ENCODE measurements at regions of chr2 and their contacts with region 1.

Region 1: GRCh38 chr2:60002158-60002867 is 551.1 kb downstream of the BCL11A start:
- DNase-seq: no peak
- ATAC-seq: no peak
- H3K4me3 Mint-ChIP-seq: no peak overlapping the region
- H3K27ac Mint-ChIP-seq: no peak overlapping the region
- H3K4me1 Mint-ChIP-seq: peaks cover 21% of the 10 kb centered on the region
- H3K27me3 Mint-ChIP-seq: no peaks in the 10 kb centered on the region
- CTCF ChIP-seq: no peak

Region 2: DNA sequence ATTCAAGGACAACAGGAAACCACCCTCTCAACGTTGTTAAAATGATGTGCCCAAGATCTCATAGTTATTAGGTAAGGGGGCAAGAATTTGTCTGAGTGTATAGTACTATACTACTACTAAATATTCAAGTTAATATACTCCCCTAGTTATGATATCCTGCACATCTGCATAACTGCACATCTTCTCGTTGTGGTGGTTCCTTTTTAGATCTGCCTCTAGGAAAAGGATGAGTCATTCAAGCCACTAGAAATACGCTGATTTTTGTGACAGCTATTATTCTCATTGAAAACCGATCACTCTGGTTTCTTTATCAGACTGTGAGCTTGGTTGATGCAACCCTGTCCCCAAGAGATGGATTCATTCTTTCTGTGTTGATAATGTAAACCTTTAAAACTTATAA is 694.2 kb before region 1 on chr2:
- CTCF ChIA-PET with region 1: no interaction called
- POLR2A ChIA-PET with region 1: no interaction called
- intact Hi-C with region 1: loop called (anchors 5 kb)
- DNase-seq: no peak
- ATAC-seq: no peak
- H3K4me3 Mint-ChIP-seq: no peak overlapping the region
- H3K27ac Mint-ChIP-seq: no peak overlapping the region
- H3K4me1 Mint-ChIP-seq: peaks cover 6% of the 10 kb centered on the region
- H3K27me3 Mint-ChIP-seq: peaks cover 2% of the 10 kb centered on the region
- CTCF ChIP-seq: no peak

Region 3: GRCh38 chr2:59630789-59631188 is 371.5 kb before region 1 on chr2:
- CTCF ChIA-PET with region 1: no interaction called
- POLR2A ChIA-PET with region 1: no interaction called
- intact Hi-C with region 1: no loop called
- DNase-seq: no peak
- ATAC-seq: no peak
- H3K4me3 Mint-ChIP-seq: no peak overlapping the region
- H3K27ac Mint-ChIP-seq: no peak overlapping the region
- H3K4me1 Mint-ChIP-seq: no peaks in the 10 kb centered on the region
- H3K27me3 Mint-ChIP-seq: peaks cover 2% of the 10 kb centered on the region
- CTCF ChIP-seq: no peak

Region 4: DNA sequence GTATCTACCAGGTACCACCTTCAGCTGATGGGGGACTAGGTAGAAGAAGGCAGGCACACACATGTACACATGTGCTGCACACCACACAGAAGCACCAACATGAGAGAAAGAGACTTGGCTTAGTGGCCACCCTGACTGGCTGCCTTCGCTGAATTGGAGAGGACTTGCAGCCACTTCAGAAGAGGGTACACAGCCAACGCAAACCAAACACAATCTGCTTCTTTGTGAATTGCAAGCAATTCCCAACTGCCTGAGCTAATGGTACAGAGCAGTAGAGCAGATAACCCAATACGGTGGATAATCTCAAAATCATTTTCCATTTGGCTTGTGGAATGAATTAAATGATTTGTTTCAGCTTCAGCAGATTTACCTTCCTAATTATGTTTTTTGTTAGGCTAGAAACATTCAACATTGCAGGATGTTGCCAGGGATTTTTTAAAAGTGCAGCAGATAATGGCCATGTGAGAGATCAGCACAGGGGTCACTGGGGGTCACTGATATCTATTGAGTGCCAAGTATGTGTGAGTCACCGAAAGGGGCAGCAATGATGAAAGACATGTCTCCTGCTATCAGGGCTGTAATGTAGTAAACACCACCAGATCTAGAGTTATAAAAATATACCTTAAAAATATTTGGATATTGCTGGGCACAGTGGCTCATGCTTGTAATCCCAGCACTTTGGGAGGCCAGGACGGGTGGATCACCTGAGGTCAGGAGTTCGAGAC is 101.4 kb before region 1 on chr2:
- CTCF ChIA-PET with region 1: no interaction called
- POLR2A ChIA-PET with region 1: no interaction called
- intact Hi-C with region 1: no loop called
- DNase-seq: no peak
- ATAC-seq: no peak
- H3K4me3 Mint-ChIP-seq: no peak overlapping the region
- H3K27ac Mint-ChIP-seq: no peak overlapping the region
- H3K4me1 Mint-ChIP-seq: peaks cover 15% of the 10 kb centered on the region
- H3K27me3 Mint-ChIP-seq: peaks cover 5% of the 10 kb centered on the region
- CTCF ChIP-seq: no peak

Region 5: GRCh38 chr2:60094450-60094929 is 92.2 kb after region 1 on chr2:
- CTCF ChIA-PET with region 1: no interaction called
- POLR2A ChIA-PET with region 1: no interaction called
- intact Hi-C with region 1: no loop called
- DNase-seq: no peak
- ATAC-seq: no peak
- H3K4me3 Mint-ChIP-seq: no peak overlapping the region
- H3K27ac Mint-ChIP-seq: no peak overlapping the region
- H3K4me1 Mint-ChIP-seq: peaks cover 13% of the 10 kb centered on the region
- H3K27me3 Mint-ChIP-seq: no peaks in the 10 kb centered on the region
- CTCF ChIP-seq: no peak